ENCODE measurements at regions of chr16 and their contacts with region 1.

Region 1: DNA sequence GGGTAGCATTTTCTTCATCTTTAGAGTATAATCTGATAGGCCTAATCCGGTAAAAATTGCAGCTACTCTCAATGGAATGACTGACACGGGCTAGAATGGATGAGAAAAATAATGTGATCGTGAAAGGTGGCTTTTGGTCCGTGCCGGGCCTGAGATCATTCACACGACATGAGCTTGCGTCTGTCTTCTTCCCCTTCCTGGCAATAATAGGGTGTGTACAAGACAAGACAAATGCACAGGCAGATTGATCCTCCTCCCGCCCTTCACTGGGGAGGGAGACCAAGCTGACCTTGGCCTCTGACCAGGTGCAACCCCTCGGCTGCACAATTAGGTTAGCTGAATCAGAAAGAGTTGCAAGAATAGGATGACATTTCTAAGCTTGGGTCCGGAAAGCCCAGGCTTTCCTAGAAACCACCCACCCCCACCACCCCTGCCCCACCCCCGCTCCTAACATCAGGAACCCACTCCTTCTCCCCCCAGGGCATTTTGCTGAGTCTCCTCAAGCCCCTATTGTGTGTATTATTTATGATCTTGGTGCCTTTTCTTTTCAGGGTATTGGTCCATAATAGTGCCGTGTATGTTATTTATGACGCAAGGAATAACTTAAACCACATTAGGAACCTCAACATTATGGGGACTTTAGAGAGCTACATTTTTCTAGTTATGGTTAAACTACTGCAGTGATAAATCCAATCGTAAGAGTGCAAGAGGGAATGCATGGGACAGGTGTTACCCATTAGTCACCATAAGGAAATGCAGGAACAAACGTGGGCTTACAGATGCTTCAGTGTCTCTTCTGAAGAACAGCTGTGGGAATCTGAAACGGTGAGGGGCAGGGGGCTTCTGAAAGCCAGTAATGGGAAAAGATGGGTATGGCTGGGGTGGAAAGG is 540.1 kb upstream of the PSMD7 start:
- DNase-seq: no peak
- H3K4me3 ChIP-seq: no peak overlapping the region
- H3K27ac ChIP-seq: no peak overlapping the region
- H3K4me1 ChIP-seq: no peaks in the 10 kb centered on the region
- H3K27me3 ChIP-seq: peaks cover 0 to 5% of the 10 kb centered on the region in 2 donors
- CTCF ChIP-seq: no peak
- POLR2A ChIP-seq: no peak

Region 2: DNA sequence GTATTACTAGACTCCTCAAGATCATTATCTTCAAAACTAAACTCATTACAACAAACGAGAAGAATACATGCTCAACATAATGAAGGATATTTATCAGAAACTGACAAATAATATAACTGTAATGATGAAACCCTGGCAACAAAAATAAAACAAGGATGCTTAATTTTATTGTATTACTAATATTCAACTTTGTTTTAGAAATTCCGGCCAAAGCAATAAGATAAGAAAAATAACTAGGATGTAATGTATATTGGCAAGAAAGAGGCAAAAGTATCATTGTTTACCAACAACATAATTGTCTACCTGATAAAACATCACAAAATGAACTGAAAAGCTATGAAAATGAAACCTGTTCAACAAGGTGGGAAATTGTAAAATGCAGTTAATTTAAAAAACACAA is 120.3 kb before region 1 on chr16:
- intact Hi-C with region 1: loop called (anchors 5 kb)
- DNase-seq: no peak
- H3K4me3 ChIP-seq: no peak overlapping the region
- H3K27ac ChIP-seq: no peak overlapping the region
- H3K4me1 ChIP-seq: no peaks in the 10 kb centered on the region
- H3K27me3 ChIP-seq: no peaks in the 10 kb centered on the region
- CTCF ChIP-seq: no peak
- POLR2A ChIP-seq: no peak